ENCODE measurements at regions of chr2 and their contacts with region 1.

Region 1: GRCh38 chr2:110812726-110813645 is 80.6 kb downstream of the ACOXL start:
- DNase-seq: peak; percentile 20
- ATAC-seq: peak; percentile 44
- H3K4me3 Mint-ChIP-seq: no peak overlapping the region
- H3K27ac Mint-ChIP-seq: no peak overlapping the region
- H3K4me1 Mint-ChIP-seq: peaks cover 18% of the 10 kb centered on the region
- H3K27me3 Mint-ChIP-seq: peaks cover 11% of the 10 kb centered on the region
- CTCF ChIP-seq: no peak

Region 2: DNA sequence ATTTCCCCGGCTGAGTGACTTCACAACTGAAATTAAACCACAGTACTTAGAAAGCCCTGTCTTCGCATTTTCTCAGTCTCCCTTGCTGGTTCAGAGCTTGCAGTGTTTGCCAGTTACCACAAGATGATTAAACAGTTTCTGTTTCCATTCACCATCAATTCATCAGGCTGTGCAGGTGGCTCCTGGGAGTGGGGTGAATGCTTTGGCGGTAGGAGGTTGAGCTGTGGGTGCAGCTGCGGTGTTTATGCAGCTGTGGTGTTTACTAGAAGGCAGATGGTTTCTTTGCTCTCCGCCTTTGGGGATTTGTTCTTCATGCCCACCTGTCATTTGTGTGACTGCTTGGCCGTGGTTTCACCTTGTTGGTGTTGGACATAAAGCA is 64.5 kb before region 1 on chr2:
- CTCF ChIA-PET with region 1: no interaction called
- POLR2A ChIA-PET with region 1: no interaction called
- intact Hi-C with region 1: no loop called
- DNase-seq: peak; percentile 88
- ATAC-seq: peak; percentile 95
- H3K4me3 Mint-ChIP-seq: peak overlapping the region; percentile 37
- H3K27ac Mint-ChIP-seq: peak overlapping the region; percentile 46
- H3K4me1 Mint-ChIP-seq: peaks cover 21% of the 10 kb centered on the region
- H3K27me3 Mint-ChIP-seq: peaks cover 58% of the 10 kb centered on the region
- CTCF ChIP-seq: no peak

Region 3: DNA sequence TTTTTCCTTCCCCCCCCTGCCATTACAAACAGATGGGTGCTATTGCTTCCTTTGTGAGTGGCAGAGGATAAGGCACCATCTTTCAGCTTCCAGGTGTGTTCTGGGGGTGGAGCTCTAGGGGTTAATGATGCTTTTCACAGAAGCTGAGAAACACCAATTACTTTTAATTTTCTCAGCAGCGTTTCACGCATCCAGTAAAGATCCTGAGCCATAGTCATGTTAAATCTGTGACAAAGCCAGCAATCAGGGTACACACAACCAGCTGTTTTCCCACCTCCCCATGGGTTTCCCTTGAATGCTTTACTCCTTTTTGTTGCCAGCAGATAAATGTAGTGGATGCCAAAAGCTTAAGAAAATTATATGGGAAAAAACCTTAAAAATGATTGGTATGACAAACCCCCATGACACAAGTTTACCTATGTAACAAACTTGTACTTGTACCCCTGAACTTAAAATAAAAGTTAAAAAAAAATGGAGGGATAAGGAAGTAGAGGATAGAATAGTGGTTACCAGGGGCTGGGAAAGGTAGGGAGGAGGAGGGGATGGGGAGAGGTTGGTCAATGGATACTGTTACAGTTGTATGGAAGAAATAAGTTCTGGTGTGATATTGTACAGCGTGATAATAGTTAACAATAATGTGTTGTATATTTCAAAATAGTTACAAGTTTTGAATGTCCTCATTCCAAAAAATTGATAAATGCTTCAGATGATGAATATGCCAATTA is 10.6 kb before region 1 on chr2:
- CTCF ChIA-PET with region 1: no interaction called
- POLR2A ChIA-PET with region 1: no interaction called
- intact Hi-C with region 1: no loop called
- DNase-seq: no peak
- ATAC-seq: no peak
- H3K4me3 Mint-ChIP-seq: no peak overlapping the region
- H3K27ac Mint-ChIP-seq: no peak overlapping the region
- H3K4me1 Mint-ChIP-seq: peaks cover 17% of the 10 kb centered on the region
- H3K27me3 Mint-ChIP-seq: peaks cover 49% of the 10 kb centered on the region
- CTCF ChIP-seq: no peak

Region 4: GRCh38 chr2:110843959-110844510 is 31.0 kb after region 1 on chr2:
- CTCF ChIA-PET with region 1: interaction called, 15 read pairs
- POLR2A ChIA-PET with region 1: no interaction called
- intact Hi-C with region 1: no loop called
- DNase-seq: no peak
- ATAC-seq: no peak
- H3K4me3 Mint-ChIP-seq: no peak overlapping the region
- H3K27ac Mint-ChIP-seq: peak overlapping the region; percentile 78
- H3K4me1 Mint-ChIP-seq: peaks cover 64% of the 10 kb centered on the region
- H3K27me3 Mint-ChIP-seq: peaks cover 5% of the 10 kb centered on the region
- CTCF ChIP-seq: no peak

Region 5: DNA sequence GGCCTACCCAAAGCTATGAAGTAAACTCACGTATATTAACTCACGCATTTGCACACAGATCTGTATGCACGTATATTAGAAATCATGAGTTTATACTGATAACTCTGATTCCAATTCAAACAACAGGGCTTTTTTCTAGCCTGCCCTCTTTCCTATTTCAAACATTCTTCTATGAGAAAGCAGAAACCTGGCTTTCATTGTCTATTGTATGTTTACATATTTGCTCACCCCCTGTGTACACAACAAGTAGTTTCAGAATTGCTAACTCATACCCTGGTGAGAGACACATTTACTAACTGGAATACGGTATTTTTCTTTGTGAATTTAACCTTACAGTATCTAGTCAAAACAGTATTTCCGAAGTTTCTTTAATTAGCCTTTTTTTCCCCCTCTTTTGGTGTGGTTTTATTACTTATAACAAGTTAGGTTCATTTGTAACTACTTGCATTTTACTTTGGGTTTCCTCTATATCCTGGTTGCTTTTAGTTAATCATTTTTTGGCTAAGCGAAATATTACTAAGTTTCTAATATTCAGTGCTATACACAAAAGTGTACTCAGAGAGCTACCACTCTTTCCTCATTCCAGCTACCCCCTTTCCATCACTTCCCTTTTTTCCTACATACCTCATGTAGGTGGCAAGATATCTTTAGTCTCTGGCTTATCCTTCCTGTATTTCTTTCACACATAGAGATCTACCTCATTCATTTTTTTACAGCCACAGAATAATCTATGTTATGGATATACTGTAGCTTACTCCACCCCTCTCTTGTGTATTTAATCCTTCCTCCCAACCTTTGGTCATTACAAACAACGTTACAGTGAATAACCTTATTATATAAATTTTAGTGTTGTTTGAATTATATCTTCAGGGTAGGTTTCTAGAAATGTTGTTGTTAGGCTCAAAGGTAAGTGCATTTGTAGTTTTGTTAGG is 195.0 kb after region 1 on chr2:
- CTCF ChIA-PET with region 1: interaction called, 12 read pairs
- POLR2A ChIA-PET with region 1: no interaction called
- intact Hi-C with region 1: no loop called
- DNase-seq: no peak
- ATAC-seq: no peak
- H3K4me3 Mint-ChIP-seq: no peak overlapping the region
- H3K27ac Mint-ChIP-seq: no peak overlapping the region
- H3K4me1 Mint-ChIP-seq: peaks cover 19% of the 10 kb centered on the region
- H3K27me3 Mint-ChIP-seq: peaks cover 13% of the 10 kb centered on the region
- CTCF ChIP-seq: no peak

Region 6: DNA sequence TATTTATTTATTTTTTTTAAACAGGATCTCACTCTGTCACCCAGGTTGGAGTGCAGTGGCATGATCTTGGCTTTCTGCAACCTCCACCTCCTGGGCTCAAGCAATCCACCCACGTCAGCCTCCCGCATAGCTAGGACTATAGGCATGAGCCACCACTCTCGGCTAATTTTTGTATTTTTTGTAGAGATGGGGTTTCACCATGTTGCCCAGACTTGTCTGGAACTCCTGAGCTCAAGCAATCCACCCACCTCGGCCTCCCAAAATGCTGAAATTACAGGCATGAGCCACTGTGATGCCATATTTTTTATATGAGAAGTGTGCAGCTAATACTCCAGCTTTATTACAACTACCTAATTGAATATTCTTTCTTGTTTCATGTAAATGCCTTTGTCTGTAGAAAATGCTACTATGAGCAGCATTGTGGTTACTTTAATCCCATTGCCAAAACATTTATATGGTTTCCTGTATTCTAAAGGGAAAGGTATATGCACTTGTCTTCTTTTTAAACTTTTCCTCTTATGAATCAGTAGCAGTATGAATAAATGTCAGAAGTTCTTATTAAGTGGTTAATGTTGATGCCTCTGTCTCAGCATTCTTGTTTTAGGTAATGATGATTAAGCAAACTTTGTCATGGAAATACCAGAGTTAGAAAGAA is 298.2 kb after region 1 on chr2:
- CTCF ChIA-PET with region 1: interaction called, 18 read pairs
- POLR2A ChIA-PET with region 1: interaction called, 4 read pairs
- intact Hi-C with region 1: loop called (anchors 5 kb)
- DNase-seq: no peak
- ATAC-seq: peak; percentile 19
- H3K4me3 Mint-ChIP-seq: no peak overlapping the region
- H3K27ac Mint-ChIP-seq: no peak overlapping the region
- H3K4me1 Mint-ChIP-seq: peaks cover 24% of the 10 kb centered on the region
- H3K27me3 Mint-ChIP-seq: peaks cover 36% of the 10 kb centered on the region
- CTCF ChIP-seq: no peak

Measured in activated CD8-positive, alpha-beta T cell treated with anti-CD3 and anti-CD28 coated beads for 36 hours (primary cell).